ENCODE measurements at regions of chr6 and their contacts with region 1.

Region 1: DNA sequence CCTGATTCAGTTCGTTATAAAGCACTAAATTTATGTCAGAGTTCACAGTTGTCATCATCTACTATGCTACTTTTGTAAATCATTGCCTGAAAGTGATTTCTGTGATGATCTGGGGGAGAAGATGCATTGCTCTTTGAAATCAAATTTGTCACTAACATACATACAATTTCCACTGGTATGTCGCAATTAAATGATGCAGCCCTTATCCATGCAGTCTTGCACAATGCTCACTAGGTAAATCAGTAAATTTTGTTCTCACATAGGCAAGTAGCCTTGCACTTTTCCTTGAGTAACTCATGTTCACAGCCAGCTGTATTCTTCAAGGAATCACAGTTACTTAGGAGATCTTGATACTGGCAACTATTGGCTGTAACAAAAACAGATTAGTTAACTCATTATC is 20.8 kb downstream of the CRISP2 start:
- DNase-seq: no peak
- H3K4me3 ChIP-seq: no peak overlapping the region
- H3K27ac ChIP-seq: no peak overlapping the region
- H3K4me1 ChIP-seq: no peaks in the 10 kb centered on the region
- H3K27me3 ChIP-seq: no peaks in the 10 kb centered on the region
- CTCF ChIP-seq: no peak
- EP300 ChIP-seq: no peak
- POLR2A ChIP-seq: no peak

Region 2: DNA sequence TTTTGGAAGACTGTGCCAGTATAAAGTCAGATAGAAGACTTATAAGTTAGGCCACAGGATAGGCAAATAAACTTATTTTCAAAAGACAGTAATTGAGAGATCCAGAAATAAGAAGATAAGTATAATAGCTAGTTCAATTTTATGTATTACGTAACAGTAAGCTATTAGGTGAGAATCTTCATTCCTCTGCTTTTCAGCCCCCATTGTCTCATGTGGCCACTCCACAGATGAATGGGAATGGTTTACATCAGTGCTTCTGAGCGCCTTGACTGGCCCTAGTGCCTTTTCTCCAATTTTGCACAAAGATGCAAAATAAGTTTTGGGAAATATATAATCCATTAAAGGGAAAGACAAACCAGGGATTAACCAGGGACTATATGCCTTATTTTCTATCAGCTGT is 780.0 kb before region 1 on chr6:
- in situ Hi-C with region 1: no loop called
- intact Hi-C with region 1: loop called (anchors 5 kb)
- DNase-seq: no peak
- H3K4me3 ChIP-seq: no peak overlapping the region
- H3K27ac ChIP-seq: no peak overlapping the region
- H3K4me1 ChIP-seq: no peaks in the 10 kb centered on the region
- H3K27me3 ChIP-seq: no peaks in the 10 kb centered on the region
- CTCF ChIP-seq: no peak
- EP300 ChIP-seq: no peak
- POLR2A ChIP-seq: no peak

Measured in transverse colon (tissue), 4 donors.